ENCODE measurements at regions of chr9 and their contacts with region 1.

Region 1: GRCh38 chr9:116234106-116234505 is 80.5 kb downstream of the PAPPA start:
- DNase-seq: no peak
- ATAC-seq: no peak
- H3K4me3 ChIP-seq: no peak overlapping the region
- H3K27ac ChIP-seq: no peak overlapping the region
- H3K4me1 ChIP-seq: no peaks in the 10 kb centered on the region
- H3K27me3 ChIP-seq: no peaks in the 10 kb centered on the region
- CTCF ChIP-seq: no peak

Region 2: GRCh38 chr9:116298878-116299391 is 64.8 kb after region 1 on chr9:
- intact Hi-C with region 1: loop called in 1 of 2 experiments (anchors 10 kb)
- DNase-seq: no peak
- ATAC-seq: no peak
- H3K4me3 ChIP-seq: no peak overlapping the region
- H3K27ac ChIP-seq: no peak overlapping the region
- H3K4me1 ChIP-seq: no peaks in the 10 kb centered on the region
- H3K27me3 ChIP-seq: no peaks in the 10 kb centered on the region
- CTCF ChIP-seq: no peak

Region 3: GRCh38 chr9:116405321-116405720 is 171.2 kb after region 1 on chr9:
- intact Hi-C with region 1: no loop called
- DNase-seq: no peak
- ATAC-seq: no peak
- H3K4me3 ChIP-seq: no peak overlapping the region
- H3K27ac ChIP-seq: no peak overlapping the region
- H3K4me1 ChIP-seq: no peaks in the 10 kb centered on the region
- H3K27me3 ChIP-seq: no peaks in the 10 kb centered on the region
- CTCF ChIP-seq: no peak

Region 4: DNA sequence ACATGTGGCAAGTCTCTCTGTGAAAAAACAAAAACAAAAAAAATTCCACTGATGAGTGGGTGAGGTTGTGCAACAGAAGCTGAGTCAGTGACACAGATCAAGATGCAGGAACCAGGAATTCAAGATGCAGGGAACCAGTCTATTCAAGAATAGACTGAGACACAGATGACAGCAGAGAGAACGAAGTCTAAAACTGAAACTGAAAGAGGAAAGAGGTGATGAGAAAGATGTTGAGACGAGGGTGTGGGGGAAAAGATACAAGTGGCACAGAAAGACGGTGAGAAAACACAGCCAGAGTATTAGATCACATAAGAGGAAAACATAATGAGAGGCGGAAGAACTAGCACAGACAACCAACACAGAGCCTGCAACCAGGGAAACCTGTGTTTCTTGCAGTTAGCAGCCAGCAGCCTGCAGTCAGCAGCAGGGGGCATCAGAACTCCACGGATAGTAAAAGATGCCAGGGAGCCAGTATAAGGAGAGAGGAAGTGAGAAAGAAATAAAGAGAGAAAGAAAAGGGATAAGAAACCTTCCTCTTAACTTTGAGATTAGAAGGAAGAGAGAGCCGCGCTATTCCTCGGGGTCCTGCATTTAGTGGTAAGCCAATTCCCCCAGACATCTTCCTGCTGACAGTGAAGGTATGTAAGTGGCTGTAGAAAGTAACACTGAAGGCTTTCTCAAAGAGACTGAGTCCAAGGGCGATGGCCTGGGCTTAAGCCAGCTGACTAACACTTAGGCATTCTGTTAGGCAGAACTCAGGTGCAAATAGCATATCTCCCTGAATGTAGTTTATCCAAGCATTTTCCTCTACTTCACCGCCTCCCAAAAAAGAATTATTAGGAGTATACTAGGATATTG is 1549.1 kb after region 1 on chr9:
- intact Hi-C with region 1: no loop called
- DNase-seq: peak; percentile 65 to 79
- ATAC-seq: peak; percentile 55 to 90 (median 83)
- H3K4me3 ChIP-seq: peak overlapping the region; percentile 56
- H3K27ac ChIP-seq: no peak overlapping the region
- H3K4me1 ChIP-seq: no peaks in the 10 kb centered on the region
- H3K27me3 ChIP-seq: no peaks in the 10 kb centered on the region
- CTCF ChIP-seq: peak; percentile 57